Activated CD8-positive, alpha-beta T cell treated with anti-CD3 and anti-CD28 coated beads for 36 hours (primary cell): ENCODE measurements at regions of chr12 and their contacts with region 1.

Region 1: GRCh38 chr12:31896514-31897039 is 62.6 kb upstream of the RESF1 start:
- DNase-seq: peak; percentile 94
- ATAC-seq: peak; percentile 94
- H3K4me3 Mint-ChIP-seq: peak overlapping the region; percentile 43
- H3K27ac Mint-ChIP-seq: peak overlapping the region; percentile 98
- H3K4me1 Mint-ChIP-seq: peaks cover 49% of the 10 kb centered on the region
- H3K27me3 Mint-ChIP-seq: no peaks in the 10 kb centered on the region
- CTCF ChIP-seq: no peak

Region 2: DNA sequence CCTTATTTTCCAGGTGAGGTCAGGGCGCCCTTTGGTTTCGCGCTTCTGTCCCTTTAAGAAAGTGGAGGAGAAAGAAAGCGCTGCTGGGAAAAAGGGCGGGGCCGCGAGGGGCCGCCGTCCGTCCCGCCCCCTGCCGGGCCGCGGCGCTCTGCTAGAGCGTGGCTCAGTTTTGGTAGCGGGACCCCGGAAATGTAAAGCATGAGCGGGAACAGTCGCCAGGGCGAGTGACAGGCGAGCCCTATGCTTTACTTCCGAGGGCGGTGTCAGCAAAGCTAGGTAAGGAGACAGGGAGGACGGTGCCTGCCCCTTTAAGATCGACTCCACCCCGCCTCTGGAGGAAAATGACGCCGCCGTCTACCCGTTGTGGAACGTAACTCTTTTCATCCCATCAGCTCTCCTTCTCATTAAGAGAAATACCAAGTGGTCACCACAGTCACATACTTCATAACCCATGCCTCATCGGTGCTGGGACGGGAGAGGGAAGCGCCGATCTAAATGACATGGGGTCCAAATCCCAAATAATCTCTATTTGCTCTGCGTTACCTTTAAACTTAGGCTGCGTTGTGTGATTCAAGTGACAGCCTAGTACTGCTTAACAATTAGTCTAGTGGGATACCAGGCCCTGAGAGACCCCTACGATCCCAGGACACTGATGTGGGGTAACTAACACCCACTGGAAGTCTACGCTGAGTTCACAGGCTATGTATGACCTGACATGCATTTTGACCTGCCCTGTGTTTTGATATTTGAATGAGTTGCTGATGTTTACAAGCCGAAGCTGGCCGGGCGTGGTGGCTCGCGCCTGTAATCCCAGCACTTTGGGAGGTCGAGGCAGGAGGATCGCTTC is 237.3 kb before region 1 on chr12 and contains the start of gene ETFBKMT:
- CTCF ChIA-PET with region 1: no interaction called
- POLR2A ChIA-PET with region 1: no interaction called
- intact Hi-C with region 1: loop called (anchors 2 kb)
- DNase-seq: peak; percentile 97
- ATAC-seq: peak; percentile 99
- H3K4me3 Mint-ChIP-seq: peak within 1 kb of the TSS; percentile 92
- H3K27ac Mint-ChIP-seq: peak within 1 kb of the TSS; percentile 98
- H3K4me1 Mint-ChIP-seq: peaks cover 8% of the 10 kb centered on the region
- H3K27me3 Mint-ChIP-seq: no peaks in the 10 kb centered on the region
- CTCF ChIP-seq: no peak
- total RNA-seq, gene ETFBKMT: 0.99 to 1.1 TPM

Region 3: DNA sequence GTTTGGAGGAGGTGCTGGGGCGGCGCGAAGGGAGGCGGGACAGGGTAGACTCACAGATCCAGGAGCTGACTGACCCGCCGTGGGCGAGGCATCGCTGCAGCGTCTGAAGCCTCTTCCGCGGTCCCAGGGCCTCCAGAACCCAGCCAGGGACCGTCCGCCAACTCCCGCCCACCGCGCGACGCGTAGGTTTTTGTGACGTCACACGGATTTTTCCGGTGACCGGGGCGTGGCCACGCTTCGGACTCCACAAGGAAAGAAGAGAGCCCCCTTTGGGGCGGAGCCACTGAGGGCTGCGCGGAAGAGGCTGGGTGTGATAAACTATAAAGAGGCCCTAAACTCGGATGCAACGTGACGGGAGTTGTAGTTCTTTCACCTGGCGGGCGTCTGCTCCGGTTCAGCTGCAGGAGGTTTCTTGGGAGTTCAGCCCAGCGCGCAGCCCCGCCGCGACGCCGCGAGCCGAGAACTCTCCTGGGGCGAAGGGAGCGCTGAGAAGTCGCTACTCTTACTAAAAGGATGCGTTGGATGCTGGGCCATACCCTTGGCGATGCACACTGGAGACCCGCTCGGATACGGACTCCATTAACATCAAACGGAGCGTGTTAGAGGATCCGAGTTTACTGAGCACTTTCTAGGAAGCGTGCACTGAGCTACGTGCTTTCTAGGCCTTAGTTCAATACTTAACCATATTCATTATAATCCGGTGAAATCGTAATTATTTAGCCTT is 167.5 kb before region 1 on chr12 and contains the start of gene AMN1:
- CTCF ChIA-PET with region 1: interaction called, 3 read pairs
- POLR2A ChIA-PET with region 1: interaction called, 7 read pairs
- intact Hi-C with region 1: loop called (anchors 10 kb)
- DNase-seq: peak; percentile 99
- ATAC-seq: peak; percentile 91
- H3K4me3 Mint-ChIP-seq: peak within 1 kb of the TSS; percentile 95
- H3K27ac Mint-ChIP-seq: peak within 1 kb of the TSS; percentile 99
- H3K4me1 Mint-ChIP-seq: peaks cover 60% of the 10 kb centered on the region
- H3K27me3 Mint-ChIP-seq: no peaks in the 10 kb centered on the region
- CTCF ChIP-seq: no peak
- total RNA-seq, gene AMN1: 3.5 to 4.1 TPM

Region 4: DNA sequence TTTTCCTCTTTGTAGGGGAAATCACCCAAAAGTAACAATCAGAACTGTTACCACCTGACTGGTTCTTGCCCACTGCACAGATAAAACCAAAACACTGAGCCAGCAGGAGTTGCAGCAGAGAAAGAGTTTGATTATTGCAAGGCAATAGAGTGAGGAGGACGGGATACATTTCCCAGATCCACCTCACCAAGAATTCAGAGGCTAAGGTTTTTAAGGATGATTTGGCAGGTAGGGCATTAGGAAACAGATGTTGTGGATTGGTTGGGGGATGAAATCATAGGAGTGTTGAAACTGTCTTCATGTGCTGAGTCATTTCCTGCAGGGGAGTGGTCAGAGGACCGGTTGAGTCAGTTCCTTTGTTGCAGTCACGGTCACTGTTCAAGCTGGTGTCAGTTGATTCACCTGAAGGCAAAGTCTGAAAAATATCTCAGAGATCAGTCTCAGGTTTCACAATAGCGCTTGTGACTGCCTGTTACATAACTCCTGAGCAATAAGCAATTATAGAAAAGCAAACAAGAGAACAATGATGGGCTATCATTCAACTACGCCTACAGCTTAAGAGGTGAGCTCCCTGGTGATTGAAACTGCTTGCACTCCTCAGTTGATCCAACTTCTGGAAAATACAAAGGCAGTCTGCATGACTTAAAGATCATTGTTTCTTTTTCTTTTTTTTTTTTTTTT is 147.4 kb before region 1 on chr12:
- CTCF ChIA-PET with region 1: no interaction called
- POLR2A ChIA-PET with region 1: interaction called, 4 read pairs
- intact Hi-C with region 1: loop called (anchors 5 kb)
- DNase-seq: peak; percentile 87
- ATAC-seq: peak; percentile 90
- H3K4me3 Mint-ChIP-seq: no peak overlapping the region
- H3K27ac Mint-ChIP-seq: peak overlapping the region; percentile 53
- H3K4me1 Mint-ChIP-seq: peaks cover 63% of the 10 kb centered on the region
- H3K27me3 Mint-ChIP-seq: no peaks in the 10 kb centered on the region
- CTCF ChIP-seq: no peak

Region 5: GRCh38 chr12:31804185-31804504 is 92.4 kb before region 1 on chr12:
- CTCF ChIA-PET with region 1: no interaction called
- POLR2A ChIA-PET with region 1: interaction called, 3 read pairs
- intact Hi-C with region 1: loop called (anchors 10 kb)
- DNase-seq: no peak
- ATAC-seq: peak; percentile 38
- H3K4me3 Mint-ChIP-seq: peak overlapping the region; percentile 70
- H3K27ac Mint-ChIP-seq: peak overlapping the region; percentile 91
- H3K4me1 Mint-ChIP-seq: peaks cover 50% of the 10 kb centered on the region
- H3K27me3 Mint-ChIP-seq: no peaks in the 10 kb centered on the region
- CTCF ChIP-seq: no peak

Region 6: DNA sequence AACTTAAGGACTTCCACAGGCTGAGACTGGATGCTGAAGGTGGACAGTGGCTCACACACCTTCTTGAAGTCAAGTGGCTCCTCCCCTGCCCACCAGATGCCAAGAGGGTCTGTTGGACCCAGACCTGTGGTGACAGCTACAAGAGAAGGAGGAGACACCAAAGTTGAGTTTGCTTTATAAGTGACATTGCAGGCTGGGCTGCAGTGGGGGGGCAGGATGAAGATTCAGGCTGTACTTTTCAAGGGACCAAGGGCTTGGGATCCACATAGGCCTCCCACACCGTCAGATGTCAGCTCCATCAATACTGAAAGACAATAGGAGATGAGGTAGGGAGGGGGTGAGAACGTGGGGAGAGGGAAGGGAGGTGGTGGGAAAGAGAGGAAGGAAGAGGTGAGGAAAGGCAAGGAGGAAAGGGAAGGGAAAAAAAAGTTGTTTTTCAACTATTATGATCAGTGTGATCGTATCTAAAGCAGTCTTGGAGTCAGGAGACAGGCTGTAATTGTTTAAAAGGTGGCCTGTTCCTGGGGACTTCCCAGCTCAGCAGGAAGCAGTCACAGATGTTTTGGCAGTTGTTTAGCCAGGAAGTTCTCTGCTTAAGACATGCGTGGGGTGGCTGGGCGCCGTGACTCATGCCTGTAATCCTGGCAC is 21.5 kb before region 1 on chr12:
- CTCF ChIA-PET with region 1: interaction called, 4 read pairs
- POLR2A ChIA-PET with region 1: interaction called, 10 read pairs
- intact Hi-C with region 1: no loop called
- DNase-seq: peak; percentile 86
- ATAC-seq: peak; percentile 96
- H3K4me3 Mint-ChIP-seq: peak overlapping the region; percentile 57
- H3K27ac Mint-ChIP-seq: peak overlapping the region; percentile 100
- H3K4me1 Mint-ChIP-seq: peaks cover 35% of the 10 kb centered on the region
- H3K27me3 Mint-ChIP-seq: no peaks in the 10 kb centered on the region
- CTCF ChIP-seq: no peak

Region 7: GRCh38 chr12:31966558-31967205 is 70.1 kb after region 1 on chr12:
- CTCF ChIA-PET with region 1: no interaction called
- POLR2A ChIA-PET with region 1: interaction called, 4 read pairs
- intact Hi-C with region 1: loop called (anchors 2 kb)
- DNase-seq: peak; percentile 32
- ATAC-seq: peak; percentile 38
- H3K4me3 Mint-ChIP-seq: peak overlapping the region; percentile 83
- H3K27ac Mint-ChIP-seq: peak overlapping the region; percentile 97
- H3K4me1 Mint-ChIP-seq: peaks cover 82% of the 10 kb centered on the region
- H3K27me3 Mint-ChIP-seq: no peaks in the 10 kb centered on the region
- CTCF ChIP-seq: no peak

Region 8: GRCh38 chr12:31985832-31986231 is 89.3 kb after region 1 on chr12:
- CTCF ChIA-PET with region 1: no interaction called
- POLR2A ChIA-PET with region 1: no interaction called
- intact Hi-C with region 1: no loop called
- DNase-seq: no peak
- ATAC-seq: no peak
- H3K4me3 Mint-ChIP-seq: no peak overlapping the region
- H3K27ac Mint-ChIP-seq: peak overlapping the region; percentile 90
- H3K4me1 Mint-ChIP-seq: peaks cover 82% of the 10 kb centered on the region
- H3K27me3 Mint-ChIP-seq: no peaks in the 10 kb centered on the region
- CTCF ChIP-seq: no peak